ENCODE measurements at regions of chr10 and their contacts with region 1.

Region 1: GRCh38 chr10:11595395-11595692 is 16.1 kb downstream of the USP6NL start:
- DNase-seq: no peak
- ATAC-seq: peak; percentile 23
- H3K4me3 ChIP-seq: peak overlapping the region in 3 of 5 experiments; percentile 1 to 47 (median 15)
- H3K4me3 Mint-ChIP-seq: peak overlapping the region; percentile 77
- H3K27ac ChIP-seq: peak overlapping the region; percentile 53 to 80
- H3K27ac Mint-ChIP-seq: peak overlapping the region; percentile 86
- H3K4me1 ChIP-seq: peaks cover 35 to 62% of the 10 kb centered on the region in 2 donors
- H3K4me1 Mint-ChIP-seq: peaks cover 67% of the 10 kb centered on the region
- H3K27me3 ChIP-seq: no peaks in the 10 kb centered on the region
- H3K27me3 Mint-ChIP-seq: no peaks in the 10 kb centered on the region
- CTCF ChIP-seq: no peak

Region 2: DNA sequence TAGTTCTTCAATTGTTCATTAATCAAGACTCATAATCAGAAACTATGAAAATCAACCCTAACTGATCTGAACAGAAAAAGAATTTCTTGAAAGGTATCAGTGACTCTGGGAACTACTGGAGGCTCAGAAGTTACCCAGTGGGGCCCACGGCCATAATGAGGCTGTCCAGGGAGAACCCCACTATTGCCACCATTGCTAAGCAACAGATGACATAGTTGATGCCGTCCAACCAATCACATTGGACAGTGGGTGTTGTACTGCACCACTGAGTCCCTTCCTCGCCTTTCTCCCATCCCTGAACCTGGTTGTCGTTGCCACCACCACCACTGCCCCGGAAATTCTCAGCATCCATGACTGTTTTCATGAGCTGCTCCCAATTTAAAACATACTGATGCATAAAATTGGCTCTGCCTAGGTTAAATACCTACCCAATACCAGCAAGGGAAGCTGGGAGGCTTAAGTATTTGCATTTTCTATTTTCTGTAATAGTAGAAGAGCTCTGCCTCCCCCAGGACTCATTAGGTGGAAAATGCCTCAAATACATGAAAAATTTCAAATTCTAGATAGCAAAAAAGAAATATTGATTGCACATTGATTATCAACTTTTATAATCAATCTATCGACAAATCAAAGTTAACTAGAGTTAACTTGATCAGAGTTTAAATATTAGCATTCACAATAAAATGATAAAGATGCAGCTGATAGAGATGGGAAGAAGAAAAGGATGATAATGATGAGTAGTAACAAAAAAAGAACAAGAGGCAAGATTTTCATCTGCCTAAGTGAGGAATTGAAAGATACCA is 42.9 kb after region 1 on chr10:
- CTCF ChIA-PET with region 1: no interaction called
- POLR2A ChIA-PET with region 1: no interaction called
- intact Hi-C with region 1: loop called (anchors 5 kb)
- DNase-seq: peak; percentile 62
- ATAC-seq: peak; percentile 99
- H3K4me3 ChIP-seq: no peak overlapping the region
- H3K4me3 Mint-ChIP-seq: peak overlapping the region; percentile 78
- H3K27ac ChIP-seq: no peak overlapping the region
- H3K27ac Mint-ChIP-seq: peak overlapping the region; percentile 74
- H3K4me1 ChIP-seq: peaks cover 29% of the 10 kb centered on the region in 2 donors
- H3K4me1 Mint-ChIP-seq: peaks cover 55% of the 10 kb centered on the region
- H3K27me3 ChIP-seq: no peaks in the 10 kb centered on the region
- H3K27me3 Mint-ChIP-seq: no peaks in the 10 kb centered on the region
- CTCF ChIP-seq: no peak

Measured in B cell (primary cell).